GM10248 (cell line): ENCODE measurements at regions of chr6 and their contacts with region 1.

Region 1: GRCh38 chr6:156942266-156942665 is 165.1 kb downstream of the ARID1B start:
- DNase-seq: no peak
- CTCF ChIP-seq: peak; percentile 23

Region 2: DNA sequence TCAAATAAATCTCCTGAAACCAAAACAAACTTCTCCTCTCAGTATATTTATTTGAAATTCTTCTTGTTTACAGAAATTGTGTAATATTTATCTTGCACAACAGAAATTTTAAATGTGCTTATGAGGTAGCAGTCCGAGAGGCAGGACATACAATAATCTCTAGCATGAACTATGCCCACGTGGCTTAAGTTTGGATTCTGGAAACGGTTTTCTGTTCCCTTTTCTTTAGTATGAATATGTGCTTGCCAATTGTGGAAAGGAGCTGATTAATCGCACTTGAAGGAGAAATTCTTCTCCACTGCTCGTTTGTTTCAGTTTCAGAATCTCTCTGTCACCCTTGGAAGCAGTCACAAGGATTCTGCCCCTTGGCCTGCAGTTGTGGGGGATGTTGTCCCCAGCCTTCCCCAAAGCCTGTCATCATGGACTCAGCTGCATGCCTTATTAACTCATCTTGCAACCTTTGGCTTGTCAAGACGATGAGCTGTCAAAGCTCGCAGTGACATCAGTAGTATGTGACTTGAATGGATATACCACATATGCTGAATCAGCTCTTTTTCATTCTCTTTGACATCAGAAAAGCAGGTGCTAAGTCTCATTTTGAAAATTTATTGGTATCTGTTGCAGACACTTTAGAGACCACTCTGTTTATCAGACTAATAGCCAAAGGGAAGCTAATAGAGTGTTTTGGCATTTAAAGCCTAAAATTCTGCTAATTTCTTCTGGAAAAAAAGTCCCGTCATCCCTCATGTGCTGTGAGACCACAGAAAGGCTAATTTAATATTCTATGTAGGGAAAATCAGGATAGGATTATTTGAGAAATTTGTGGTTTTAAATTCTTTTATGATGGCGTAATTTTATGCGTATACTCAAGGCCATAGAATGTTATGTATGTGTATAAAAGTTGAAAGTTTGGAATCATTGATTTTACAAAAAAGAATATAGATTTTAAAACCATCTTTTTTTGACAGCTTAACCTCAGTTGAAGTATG is 21.7 kb after region 1 on chr6:
- CTCF ChIA-PET with region 1: interaction called, 11 read pairs
- POLR2A ChIA-PET with region 1: no interaction called
- DNase-seq: no peak
- CTCF ChIP-seq: no peak